ENCODE measurements at regions of chr5 and their contacts with region 1.

Region 1: GRCh38 chr5:94618493-94619328 is at the starts of genes KIAA0825 and SLF1:
- DNase-seq: peak; percentile 85
- ATAC-seq: peak; percentile 95
- H3K4me3 ChIP-seq: peak within 1 kb of the TSS; percentile 73 to 96 (median 90)
- H3K4me3 Mint-ChIP-seq: peak within 1 kb of the TSS; percentile 96
- H3K27ac ChIP-seq: peak within 1 kb of the TSS; percentile 22 to 64
- H3K27ac Mint-ChIP-seq: peak within 1 kb of the TSS; percentile 92
- H3K4me1 ChIP-seq: peaks cover 18% of the 10 kb centered on the region in 2 donors
- H3K4me1 Mint-ChIP-seq: peaks cover 22% of the 10 kb centered on the region
- H3K27me3 ChIP-seq: no peaks in the 10 kb centered on the region
- H3K27me3 Mint-ChIP-seq: no peaks in the 10 kb centered on the region
- CTCF ChIP-seq: no peak
- total RNA-seq, gene KIAA0825: 2.7 and 3.0 TPM in 2 replicates
- total RNA-seq, gene SLF1: 12.5 and 15.2 TPM in 2 replicates

Region 2: GRCh38 chr5:94111209-94112004 is 507.3 kb before region 1 on chr5:
- CTCF ChIA-PET with region 1: no interaction called
- POLR2A ChIA-PET with region 1: no interaction called
- intact Hi-C with region 1: loop called (anchors 1 kb)
- DNase-seq: peak; percentile 94
- ATAC-seq: peak; percentile 95
- H3K4me3 ChIP-seq: peak overlapping the region; percentile 68 to 95 (median 91)
- H3K4me3 Mint-ChIP-seq: peak overlapping the region; percentile 95
- H3K27ac ChIP-seq: peak overlapping the region; percentile 81 to 90
- H3K27ac Mint-ChIP-seq: peak overlapping the region; percentile 90
- H3K4me1 ChIP-seq: peaks cover 7 to 12% of the 10 kb centered on the region in 2 donors
- H3K4me1 Mint-ChIP-seq: peaks cover 40% of the 10 kb centered on the region
- H3K27me3 ChIP-seq: peaks cover 0 to 4% (median 0%) of the 10 kb centered on the region in 4 experiments
- H3K27me3 Mint-ChIP-seq: peaks cover 18% of the 10 kb centered on the region
- CTCF ChIP-seq: no peak

Region 3: DNA sequence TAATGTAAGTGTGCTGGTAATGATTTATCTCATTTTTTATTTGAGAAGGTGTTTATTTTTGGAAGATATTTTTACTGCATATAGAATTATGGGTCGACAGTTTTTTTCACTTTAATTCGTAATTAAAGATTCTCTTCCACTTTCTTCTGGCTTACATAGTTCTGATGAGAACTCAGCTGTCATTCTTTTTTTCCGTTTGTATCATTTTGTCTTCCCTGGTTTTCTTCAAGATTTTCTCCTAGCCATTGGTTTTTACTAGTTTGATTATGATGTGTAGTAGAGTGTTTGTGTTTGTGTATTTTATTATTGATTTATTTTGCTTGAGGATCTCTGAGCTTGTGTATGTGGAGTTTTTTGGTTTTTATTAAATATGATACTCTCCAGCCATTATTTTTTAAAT is 21.5 kb after region 1 on chr5:
- CTCF ChIA-PET with region 1: no interaction called
- POLR2A ChIA-PET with region 1: no interaction called
- intact Hi-C with region 1: no loop called
- DNase-seq: no peak
- ATAC-seq: no peak
- H3K4me3 ChIP-seq: no peak overlapping the region
- H3K4me3 Mint-ChIP-seq: no peak overlapping the region
- H3K27ac ChIP-seq: no peak overlapping the region
- H3K27ac Mint-ChIP-seq: no peak overlapping the region
- H3K4me1 ChIP-seq: no peaks in the 10 kb centered on the region
- H3K4me1 Mint-ChIP-seq: peaks cover 5% of the 10 kb centered on the region
- H3K27me3 ChIP-seq: no peaks in the 10 kb centered on the region
- H3K27me3 Mint-ChIP-seq: no peaks in the 10 kb centered on the region
- CTCF ChIP-seq: no peak

Region 4: DNA sequence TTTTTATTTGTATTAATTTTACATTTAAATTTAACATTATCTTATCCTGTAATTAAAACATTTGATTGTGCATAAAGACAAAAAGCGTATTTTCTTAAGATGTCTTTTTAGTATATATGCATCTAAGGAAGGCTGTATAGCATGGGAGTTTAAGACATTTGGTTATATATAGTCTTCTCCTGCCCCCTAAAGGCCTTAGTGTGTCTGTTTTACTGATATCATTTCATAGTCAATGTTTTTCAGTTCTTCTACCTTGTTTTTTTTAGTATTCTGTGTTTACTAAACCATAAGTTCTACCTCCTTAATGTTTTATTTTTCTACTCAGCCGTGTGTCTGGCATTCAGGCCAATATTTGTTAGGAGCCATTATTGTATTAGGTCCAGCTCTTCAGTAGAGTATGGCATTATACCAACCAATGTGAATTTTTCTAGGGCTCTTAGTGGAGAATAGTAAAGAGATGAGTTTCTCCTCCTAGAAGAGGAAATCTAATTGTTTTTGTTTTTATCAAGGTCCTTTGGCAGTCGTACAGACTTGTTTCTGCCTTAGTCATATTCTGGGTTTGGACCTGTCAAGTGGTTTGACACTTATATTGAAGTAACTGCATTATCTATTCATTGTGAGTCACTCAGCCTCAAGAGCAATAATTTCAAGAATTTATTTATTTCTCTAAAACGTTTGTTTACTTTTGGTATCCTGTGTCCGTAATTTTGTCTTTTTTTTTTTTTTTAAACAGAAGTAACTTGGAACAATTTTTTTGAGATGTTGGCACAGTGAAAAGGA is 74.5 kb after region 1 on chr5:
- CTCF ChIA-PET with region 1: interaction called, 3 read pairs
- POLR2A ChIA-PET with region 1: no interaction called
- intact Hi-C with region 1: loop called (anchors 5 kb)
- DNase-seq: peak; percentile 61
- ATAC-seq: no peak
- H3K4me3 ChIP-seq: no peak overlapping the region
- H3K4me3 Mint-ChIP-seq: no peak overlapping the region
- H3K27ac ChIP-seq: no peak overlapping the region
- H3K27ac Mint-ChIP-seq: no peak overlapping the region
- H3K4me1 ChIP-seq: no peaks in the 10 kb centered on the region
- H3K4me1 Mint-ChIP-seq: no peaks in the 10 kb centered on the region
- H3K27me3 ChIP-seq: no peaks in the 10 kb centered on the region
- H3K27me3 Mint-ChIP-seq: no peaks in the 10 kb centered on the region
- CTCF ChIP-seq: peak; percentile 68